Left ventricle myocardium inferior (tissue), 1 donor: ENCODE measurements at regions of chr4 and their contacts with region 1.

Region 1: DNA sequence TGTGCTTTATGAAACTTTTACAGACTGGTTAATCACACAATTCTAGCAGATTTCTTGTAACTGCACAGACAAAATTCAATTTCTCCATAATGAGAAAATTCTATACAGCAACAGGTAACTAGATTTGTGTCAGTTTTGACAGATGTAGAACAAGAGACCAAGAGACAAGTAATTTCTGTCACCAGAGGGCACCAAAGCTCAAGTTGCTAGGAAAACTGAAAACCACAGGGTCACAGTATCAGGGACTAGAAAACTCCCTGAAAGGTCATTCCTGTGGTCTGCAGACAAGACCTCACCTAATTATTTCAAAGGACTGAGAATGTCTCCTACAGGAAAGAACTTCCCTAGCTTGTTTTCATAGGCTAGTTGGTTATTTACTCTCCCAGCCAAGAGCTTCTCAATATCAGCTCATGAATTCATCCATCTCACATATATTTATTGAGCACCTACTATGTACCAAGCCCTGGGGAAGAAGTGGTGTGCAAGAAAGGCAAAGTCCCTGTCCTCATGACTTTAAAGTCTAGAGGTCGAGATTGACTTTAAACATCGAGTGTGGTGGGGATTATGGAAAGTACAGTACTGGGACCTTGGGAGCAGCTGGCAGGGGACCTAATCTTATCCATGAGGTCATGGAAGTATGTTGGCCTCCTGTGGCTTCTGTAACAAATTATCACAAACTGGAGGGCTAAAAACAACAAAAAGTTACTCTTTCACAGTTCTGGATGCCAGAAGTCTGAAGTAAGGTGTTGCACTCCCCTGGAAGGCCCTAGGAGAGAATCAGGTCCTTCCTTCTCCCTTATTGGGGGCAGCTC is 47.8 kb upstream of the SETD7 start:
- DNase-seq: no peak
- H3K4me3 ChIP-seq: no peak overlapping the region
- H3K27ac ChIP-seq: no peak overlapping the region
- H3K4me1 ChIP-seq: peaks cover 5% of the 10 kb centered on the region
- H3K27me3 ChIP-seq: no peaks in the 10 kb centered on the region
- CTCF ChIP-seq: peak; percentile 79

Region 2: GRCh38 chr4:139582044-139582443 is 21.7 kb before region 1 on chr4:
- intact Hi-C with region 1: no loop called
- DNase-seq: no peak
- H3K4me3 ChIP-seq: no peak overlapping the region
- H3K27ac ChIP-seq: no peak overlapping the region
- H3K4me1 ChIP-seq: no peaks in the 10 kb centered on the region
- H3K27me3 ChIP-seq: no peaks in the 10 kb centered on the region
- CTCF ChIP-seq: no peak

Region 3: DNA sequence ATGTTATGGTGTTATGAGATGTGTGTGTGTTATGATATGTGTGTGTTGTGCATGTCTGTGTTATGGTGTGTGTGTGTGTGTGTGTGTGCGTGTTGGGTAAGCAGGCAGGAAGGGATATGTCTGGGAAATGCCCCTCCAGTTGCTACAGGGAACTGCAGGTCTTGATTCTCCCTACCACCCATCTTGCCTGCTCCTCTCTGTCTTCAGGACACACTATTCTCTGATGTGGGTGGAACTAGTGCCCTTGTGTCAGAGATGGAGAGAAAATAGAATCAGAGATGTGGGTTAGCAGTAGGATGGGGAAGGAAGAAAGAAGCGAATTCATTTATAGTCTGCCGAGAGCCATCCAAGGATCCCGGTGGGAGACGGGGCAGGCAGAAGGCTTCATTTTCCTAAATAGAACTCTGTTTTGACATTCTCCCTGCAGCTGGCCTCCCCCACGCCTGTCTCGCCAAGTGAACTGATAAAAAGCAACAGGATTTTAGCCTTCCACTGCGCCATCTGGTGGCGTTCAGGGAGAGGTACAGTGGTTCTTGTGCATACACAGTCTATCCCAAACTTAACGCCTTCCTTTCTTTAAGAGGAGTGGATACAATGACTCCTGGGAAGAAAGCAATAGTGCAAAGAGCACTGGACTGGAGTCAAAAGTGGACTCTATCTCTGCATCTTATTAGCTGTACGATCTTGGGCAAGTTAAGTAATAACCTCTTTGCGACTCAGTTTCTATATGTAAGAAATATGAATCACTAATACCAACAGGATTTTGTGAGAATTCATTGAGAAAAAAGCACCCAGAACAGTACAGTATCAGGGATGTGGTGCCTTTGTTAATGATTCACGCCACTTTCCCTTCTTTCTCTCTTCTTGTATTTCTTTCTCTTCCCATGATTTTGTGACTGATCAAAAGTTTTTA is 47.8 kb after region 1 on chr4:
- intact Hi-C with region 1: loop called (anchors 5 kb)
- DNase-seq: peak; percentile 80
- H3K4me3 ChIP-seq: peak overlapping the region; percentile 37
- H3K27ac ChIP-seq: no peak overlapping the region
- H3K4me1 ChIP-seq: peaks cover 6% of the 10 kb centered on the region
- H3K27me3 ChIP-seq: no peaks in the 10 kb centered on the region
- CTCF ChIP-seq: peak; percentile 95